BJ (cell line): ENCODE measurements at regions of chr2 and their contacts with region 1.

Region 1: GRCh38 chr2:54704688-54705605 is 18.5 kb upstream of the EML6 start:
- DNase-seq: no peak
- H3K4me3 ChIP-seq: no peak overlapping the region
- H3K27me3 ChIP-seq: peaks cover 2% of the 10 kb centered on the region; the same call in 1 of the 2 replicates
- CTCF ChIP-seq: peak; percentile 49

Region 2: DNA sequence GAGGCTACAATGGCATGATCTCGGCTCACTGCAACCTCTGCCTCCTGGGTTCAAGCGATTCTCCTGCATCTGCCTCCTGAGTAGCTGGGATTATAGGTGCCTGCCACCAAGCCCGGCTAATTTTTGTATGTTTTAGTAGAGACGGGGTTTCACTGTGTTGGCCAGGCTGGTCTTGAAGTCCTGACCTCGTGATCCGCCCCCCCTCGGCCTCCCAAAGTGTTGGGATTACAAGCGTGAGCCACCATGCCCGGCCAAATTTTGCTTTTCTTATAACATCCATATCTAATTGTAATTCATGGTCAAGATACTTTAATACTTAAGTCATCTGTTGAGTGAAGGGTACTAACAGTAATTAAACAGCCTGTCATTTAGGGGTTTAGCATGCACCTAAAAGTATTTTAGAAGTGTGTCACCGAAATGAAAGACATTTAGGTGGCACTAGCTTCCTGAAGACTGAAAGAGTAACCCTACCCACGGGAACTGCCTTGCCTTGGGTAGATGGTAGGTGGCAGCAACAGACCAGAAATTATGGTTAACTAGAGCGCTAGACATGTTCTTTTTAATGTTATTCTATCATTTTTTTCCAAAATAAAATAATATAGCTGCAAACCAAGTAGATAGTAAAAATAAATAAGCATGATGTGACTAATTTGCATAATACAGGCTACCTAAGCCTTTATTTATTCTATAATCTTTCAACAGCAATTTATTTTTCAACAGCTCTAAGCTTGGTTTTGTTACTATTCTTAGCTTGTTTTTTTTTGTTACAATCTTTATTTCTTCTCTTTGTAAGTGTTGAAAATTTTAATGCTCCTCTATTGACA is 598.1 kb before region 1 on chr2:
- CTCF ChIA-PET with region 1: interaction called, 50 read pairs
- POLR2A ChIA-PET with region 1: no interaction called
- DNase-seq: no peak
- H3K4me3 ChIP-seq: no peak overlapping the region
- H3K27me3 ChIP-seq: no peaks in the 10 kb centered on the region
- CTCF ChIP-seq: peak; percentile 69

Region 3: GRCh38 chr2:54176577-54176976 is 528.4 kb before region 1 on chr2:
- CTCF ChIA-PET with region 1: interaction called, 27 read pairs
- POLR2A ChIA-PET with region 1: no interaction called
- DNase-seq: no peak
- H3K4me3 ChIP-seq: no peak overlapping the region
- H3K27me3 ChIP-seq: no peaks in the 10 kb centered on the region
- CTCF ChIP-seq: peak; percentile 58

Region 4: GRCh38 chr2:54416166-54416813 is 288.7 kb before region 1 on chr2:
- CTCF ChIA-PET with region 1: no interaction called
- POLR2A ChIA-PET with region 1: no interaction called
- DNase-seq: no peak
- H3K4me3 ChIP-seq: no peak overlapping the region
- H3K27me3 ChIP-seq: no peaks in the 10 kb centered on the region; the same call in 1 of the 2 replicates
- CTCF ChIP-seq: no peak

Region 5: DNA sequence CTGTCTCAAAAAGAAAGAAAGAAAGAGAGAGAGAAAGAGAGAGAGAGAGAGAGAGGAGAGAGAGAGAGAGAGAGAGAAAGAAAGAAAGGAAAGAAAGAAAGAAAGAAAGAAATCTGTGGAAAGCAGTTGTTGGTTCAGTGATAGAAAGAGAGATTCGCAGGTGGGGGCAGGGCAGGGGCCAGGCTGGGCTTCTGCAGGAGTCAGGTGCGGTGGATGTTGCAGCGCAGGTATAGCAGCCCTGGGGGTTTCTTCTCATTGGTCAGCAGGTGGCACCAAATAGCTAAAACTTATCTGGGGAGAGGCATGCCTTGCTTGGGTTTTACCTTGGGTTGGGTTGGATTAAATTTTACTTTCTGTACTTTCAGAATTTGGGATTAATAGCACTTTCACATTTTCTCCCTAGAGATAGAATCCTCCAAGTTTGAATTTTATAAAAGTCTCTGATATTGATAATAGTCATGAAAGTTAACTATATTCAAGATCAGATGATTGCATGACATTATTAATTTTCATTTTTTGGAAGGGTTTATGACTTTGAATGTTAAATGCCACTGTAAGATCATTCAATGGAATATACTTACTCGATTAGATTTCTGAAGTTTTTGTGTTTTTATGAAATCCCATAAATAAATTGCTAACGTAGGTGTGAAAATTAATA is 182.2 kb before region 1 on chr2:
- CTCF ChIA-PET with region 1: interaction called, 46 read pairs
- POLR2A ChIA-PET with region 1: no interaction called
- DNase-seq: no peak
- H3K4me3 ChIP-seq: no peak overlapping the region
- H3K27me3 ChIP-seq: no peaks in the 10 kb centered on the region
- CTCF ChIP-seq: peak; percentile 59

Region 6: GRCh38 chr2:54657664-54658083 is 47.3 kb before region 1 on chr2:
- CTCF ChIA-PET with region 1: interaction called, 25 read pairs
- POLR2A ChIA-PET with region 1: no interaction called
- DNase-seq: no peak
- H3K4me3 ChIP-seq: no peak overlapping the region
- H3K27me3 ChIP-seq: no peaks in the 10 kb centered on the region
- CTCF ChIP-seq: peak; percentile 58

Region 7: GRCh38 chr2:54665436-54665856 is 39.5 kb before region 1 on chr2:
- CTCF ChIA-PET with region 1: interaction called, 20 read pairs
- POLR2A ChIA-PET with region 1: no interaction called
- DNase-seq: no peak
- H3K4me3 ChIP-seq: no peak overlapping the region
- H3K27me3 ChIP-seq: no peaks in the 10 kb centered on the region
- CTCF ChIP-seq: peak; percentile 60

Region 8: GRCh38 chr2:54680397-54681041 is 24.4 kb before region 1 on chr2:
- CTCF ChIA-PET with region 1: interaction called, 12 read pairs
- POLR2A ChIA-PET with region 1: no interaction called
- DNase-seq: no peak
- H3K4me3 ChIP-seq: no peak overlapping the region
- H3K27me3 ChIP-seq: no peaks in the 10 kb centered on the region
- CTCF ChIP-seq: no peak

Region 9: GRCh38 chr2:54927085-54927750 is 222.3 kb after region 1 on chr2:
- CTCF ChIA-PET with region 1: no interaction called
- POLR2A ChIA-PET with region 1: no interaction called
- DNase-seq: no peak
- H3K4me3 ChIP-seq: no peak overlapping the region
- H3K27me3 ChIP-seq: peaks cover 2% of the 10 kb centered on the region; the same call in 1 of the 2 replicates
- CTCF ChIP-seq: no peak